ENCODE measurements at regions of chr20 and their contacts with region 1.

Region 1: DNA sequence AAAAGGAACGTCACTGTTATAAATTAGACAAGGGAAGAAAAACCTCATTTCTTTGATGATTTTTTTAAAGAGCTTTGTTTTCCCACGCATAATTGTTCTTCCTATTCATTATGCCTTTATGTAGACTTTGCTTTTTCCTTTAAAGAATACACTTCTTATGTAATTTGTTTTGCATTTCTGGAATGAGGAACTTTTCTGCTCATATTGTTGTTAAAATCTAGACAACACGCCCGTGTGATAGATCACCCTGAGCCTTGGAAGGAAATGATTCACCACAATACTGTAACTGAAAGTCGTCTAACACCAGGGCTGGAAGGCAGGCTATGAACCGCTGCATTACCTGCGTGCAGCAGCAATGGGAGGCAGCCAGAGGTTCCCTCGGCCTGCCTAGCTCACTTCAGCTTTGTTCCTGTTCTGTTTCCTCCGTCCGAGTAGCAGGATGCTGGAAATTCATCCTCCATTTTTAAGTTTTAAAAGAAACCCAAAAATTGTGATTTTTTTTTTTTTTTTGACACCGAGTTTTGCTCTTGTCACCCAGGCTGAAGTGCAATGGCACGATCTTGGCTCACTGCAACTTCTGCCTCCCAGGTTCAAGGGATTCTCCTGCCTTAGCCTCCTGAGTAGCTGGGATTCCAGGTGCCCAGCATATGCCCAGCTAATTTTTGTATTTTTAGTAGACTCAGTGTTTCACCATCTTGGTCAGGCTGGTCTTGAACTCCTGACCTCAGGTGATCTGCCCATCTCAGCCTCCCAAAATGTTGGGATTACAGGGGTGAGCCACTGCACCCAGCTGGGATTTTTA is 49.6 kb upstream of the ZNF217 start:
- DNase-seq: peak; percentile 59
- H3K4me3 ChIP-seq: no peak overlapping the region
- H3K27me3 ChIP-seq: no peaks in the 10 kb centered on the region
- CTCF ChIP-seq: no peak

Region 2: DNA sequence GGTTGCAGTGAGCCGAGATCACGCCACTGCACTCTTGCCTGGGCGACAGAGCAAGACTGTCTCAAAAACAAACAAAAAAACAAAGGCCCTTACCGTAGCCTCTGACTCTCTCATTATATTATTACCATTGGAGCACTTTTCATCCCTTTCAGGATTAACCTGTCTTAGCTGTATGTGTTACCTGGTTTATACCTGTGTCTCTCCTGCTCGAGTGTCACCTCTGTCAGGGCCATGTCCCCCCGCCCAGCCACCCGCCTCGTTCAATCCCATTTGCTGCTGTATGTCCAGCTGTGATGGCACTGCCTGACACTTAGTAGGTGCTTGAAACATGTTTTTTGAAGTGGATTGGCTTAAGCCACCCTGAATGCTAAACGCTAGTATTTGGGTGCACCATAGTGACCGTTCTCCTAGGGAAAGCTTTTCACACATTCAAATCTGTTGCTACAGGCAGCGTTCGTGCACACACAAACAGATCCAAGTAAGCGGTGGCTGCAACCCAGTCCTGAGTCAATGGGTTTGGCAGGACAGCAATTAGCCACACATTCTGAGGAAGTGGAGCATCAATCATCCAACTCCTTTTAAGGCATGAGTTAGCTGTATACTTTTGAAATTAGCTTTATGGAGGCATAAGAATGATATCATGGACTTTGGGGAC is 49.3 kb after region 1 on chr20:
- CTCF ChIA-PET with region 1: no interaction called
- POLR2A ChIA-PET with region 1: interaction called, 11 read pairs
- DNase-seq: no peak
- H3K4me3 ChIP-seq: no peak overlapping the region
- H3K27me3 ChIP-seq: no peaks in the 10 kb centered on the region
- CTCF ChIP-seq: no peak